MCF 10A (cell line): ENCODE measurements at regions of chr1 and their contacts with region 1.

Region 1: GRCh38 chr1:207828485-207829158 is 76.8 kb downstream of the CD46 start:
- DNase-seq: peak; percentile 96
- H3K4me3 Mint-ChIP-seq: no peak overlapping the region
- H3K27ac Mint-ChIP-seq: peak overlapping the region; percentile 96
- H3K4me1 Mint-ChIP-seq: peaks cover 78% of the 10 kb centered on the region
- H3K27me3 Mint-ChIP-seq: no peaks in the 10 kb centered on the region
- CTCF ChIP-seq: peak; percentile 99

Region 2: DNA sequence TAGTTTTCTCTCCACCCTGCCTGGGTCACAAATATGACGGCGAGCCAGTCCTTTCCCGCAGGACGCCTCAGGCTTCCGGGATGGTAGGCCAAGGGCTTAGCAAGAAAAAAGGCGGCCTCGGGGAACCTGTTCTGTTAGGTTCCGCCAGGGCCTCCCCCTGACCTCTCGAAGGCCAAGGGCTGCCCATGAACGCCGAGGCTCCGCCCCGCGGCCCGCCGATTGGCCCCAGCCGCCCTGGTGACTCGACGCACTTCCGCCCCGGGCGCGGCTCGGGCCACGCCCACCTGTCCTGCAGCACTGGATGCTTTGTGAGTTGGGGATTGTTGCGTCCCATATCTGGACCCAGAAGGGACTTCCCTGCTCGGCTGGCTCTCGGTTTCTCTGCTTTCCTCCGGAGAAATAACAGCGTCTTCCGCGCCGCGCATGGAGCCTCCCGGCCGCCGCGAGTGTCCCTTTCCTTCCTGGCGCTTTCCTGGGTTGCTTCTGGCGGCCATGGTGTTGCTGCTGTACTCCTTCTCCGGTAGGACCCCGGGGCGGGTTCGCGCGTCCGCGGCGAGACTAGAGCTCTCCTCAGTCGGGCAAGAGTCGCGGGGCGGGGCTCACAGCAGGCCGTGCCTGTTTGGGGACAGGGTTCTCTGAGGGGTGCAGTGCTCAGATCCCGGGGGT is 76.7 kb before region 1 on chr1 and contains the start of gene CD46:
- CTCF ChIA-PET with region 1: interaction called, 5 read pairs
- POLR2A ChIA-PET with region 1: interaction called, 41 read pairs
- intact Hi-C with region 1: no loop called
- DNase-seq: peak; percentile 100
- H3K4me3 Mint-ChIP-seq: peak within 1 kb of the TSS; percentile 99
- H3K27ac Mint-ChIP-seq: peak within 1 kb of the TSS; percentile 96
- H3K4me1 Mint-ChIP-seq: peaks cover 63% of the 10 kb centered on the region
- H3K27me3 Mint-ChIP-seq: no peaks in the 10 kb centered on the region
- CTCF ChIP-seq: no peak
- total RNA-seq, gene CD46: 181 and 184 TPM in 2 replicates

Region 3: GRCh38 chr1:207811920-207812720 is 16.5 kb before region 1 on chr1:
- CTCF ChIA-PET with region 1: interaction called, 59 read pairs
- POLR2A ChIA-PET with region 1: interaction called, 102 read pairs
- intact Hi-C with region 1: no loop called
- DNase-seq: peak; percentile 54
- H3K4me3 Mint-ChIP-seq: no peak overlapping the region
- H3K27ac Mint-ChIP-seq: peak overlapping the region; percentile 68
- H3K4me1 Mint-ChIP-seq: peaks cover 75% of the 10 kb centered on the region
- H3K27me3 Mint-ChIP-seq: no peaks in the 10 kb centered on the region
- CTCF ChIP-seq: peak; percentile 40

Region 4: GRCh38 chr1:207853372-207853757 is 24.7 kb after region 1 on chr1:
- CTCF ChIA-PET with region 1: interaction called, 790 read pairs
- POLR2A ChIA-PET with region 1: interaction called, 42 read pairs
- intact Hi-C with region 1: no loop called
- DNase-seq: no peak
- H3K4me3 Mint-ChIP-seq: no peak overlapping the region
- H3K27ac Mint-ChIP-seq: no peak overlapping the region
- H3K4me1 Mint-ChIP-seq: peaks cover 31% of the 10 kb centered on the region
- H3K27me3 Mint-ChIP-seq: no peaks in the 10 kb centered on the region
- CTCF ChIP-seq: no peak

Region 5: DNA sequence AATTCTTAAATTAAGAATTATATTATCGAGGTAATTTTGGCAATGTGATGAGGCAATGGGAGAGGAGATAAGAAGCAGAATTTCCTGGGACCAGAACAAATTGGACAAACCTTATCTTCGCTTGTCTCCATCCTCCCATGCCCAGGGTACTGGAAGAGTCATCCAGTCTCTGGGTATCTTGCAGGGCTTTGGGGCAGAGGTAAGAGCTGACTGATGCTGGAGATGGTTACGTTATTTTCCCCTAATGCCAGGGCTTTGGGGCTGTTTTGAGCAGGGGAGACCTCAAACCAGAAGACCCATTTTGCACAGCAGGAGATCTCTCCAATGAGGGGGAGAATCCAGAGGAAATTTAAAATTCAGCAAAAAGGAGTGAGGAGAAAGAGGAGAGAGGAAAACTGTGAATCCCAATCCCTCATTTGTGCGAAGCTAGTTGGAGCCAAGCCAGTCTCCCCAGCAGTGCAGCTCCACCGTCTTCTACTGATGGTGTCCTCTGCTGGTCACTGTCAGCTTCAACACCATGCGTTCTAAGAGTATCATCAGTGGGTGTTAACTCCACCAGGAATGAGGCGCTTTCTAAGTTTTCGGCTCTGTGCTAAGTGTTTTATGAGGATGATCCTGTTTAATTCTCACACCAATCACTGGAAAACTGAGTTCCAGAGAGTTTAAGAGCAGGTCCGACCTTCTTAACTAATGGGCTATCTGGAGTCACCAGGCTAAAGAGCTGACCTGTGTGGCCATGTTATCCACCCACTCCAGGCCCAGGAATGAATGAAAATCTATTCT is 169.1 kb after region 1 on chr1:
- CTCF ChIA-PET with region 1: interaction called, 11 read pairs
- POLR2A ChIA-PET with region 1: no interaction called
- intact Hi-C with region 1: no loop called
- DNase-seq: peak; percentile 92
- H3K4me3 Mint-ChIP-seq: no peak overlapping the region
- H3K27ac Mint-ChIP-seq: no peak overlapping the region
- H3K4me1 Mint-ChIP-seq: no peaks in the 10 kb centered on the region
- H3K27me3 Mint-ChIP-seq: peaks cover 38% of the 10 kb centered on the region
- CTCF ChIP-seq: peak; percentile 95